ENCODE measurements at regions of chr3 and their contacts with region 1.

Region 1: GRCh38 chr3:65672871-65673815 is 365.6 kb downstream of the MAGI1 start:
- DNase-seq: peak; percentile 78
- H3K4me3 Mint-ChIP-seq: no peak overlapping the region
- H3K27ac Mint-ChIP-seq: no peak overlapping the region
- H3K4me1 Mint-ChIP-seq: peaks cover 9% of the 10 kb centered on the region
- H3K27me3 Mint-ChIP-seq: no peaks in the 10 kb centered on the region
- CTCF ChIP-seq: peak; percentile 64

Region 2: DNA sequence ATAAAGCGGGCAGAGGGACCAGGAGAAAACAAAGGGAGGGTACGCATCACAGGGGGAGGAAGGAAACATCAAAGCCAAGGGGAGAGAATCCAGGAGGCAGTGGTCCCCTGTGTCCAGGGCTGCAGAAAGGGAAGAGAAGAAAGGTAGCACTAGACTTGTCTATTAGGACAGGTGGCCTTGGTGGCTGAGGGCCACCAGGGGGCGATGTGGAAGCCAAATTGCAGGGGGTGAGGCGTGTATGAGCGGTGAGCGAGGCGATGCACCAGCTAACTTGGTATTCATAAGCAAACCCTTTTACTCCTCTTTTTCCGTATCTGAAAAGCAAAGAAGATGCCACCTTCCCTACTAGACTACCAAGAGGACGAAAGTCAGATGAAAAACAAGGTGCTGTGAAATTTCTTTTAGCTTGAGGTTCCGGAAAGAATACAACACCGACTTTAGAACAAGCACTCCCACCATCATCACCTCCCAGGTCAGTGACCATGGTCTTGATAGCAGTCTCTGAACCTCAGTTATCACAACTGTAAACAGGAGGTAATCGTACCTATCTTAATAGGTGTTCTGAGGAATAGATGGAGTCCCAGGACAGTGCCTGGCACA is 331.0 kb before region 1 on chr3:
- CTCF ChIA-PET with region 1: interaction called, 5 read pairs
- POLR2A ChIA-PET with region 1: no interaction called
- intact Hi-C with region 1: loop called (anchors 2 kb)
- DNase-seq: peak; percentile 73
- H3K4me3 Mint-ChIP-seq: no peak overlapping the region
- H3K27ac Mint-ChIP-seq: no peak overlapping the region
- H3K4me1 Mint-ChIP-seq: no peaks in the 10 kb centered on the region
- H3K27me3 Mint-ChIP-seq: peaks cover 13% of the 10 kb centered on the region
- CTCF ChIP-seq: peak; percentile 68

Region 3: GRCh38 chr3:65485826-65486469 is 187.2 kb before region 1 on chr3:
- CTCF ChIA-PET with region 1: no interaction called
- POLR2A ChIA-PET with region 1: no interaction called
- intact Hi-C with region 1: loop called (anchors 5 kb)
- DNase-seq: no peak
- H3K4me3 Mint-ChIP-seq: no peak overlapping the region
- H3K27ac Mint-ChIP-seq: no peak overlapping the region
- H3K4me1 Mint-ChIP-seq: no peaks in the 10 kb centered on the region
- H3K27me3 Mint-ChIP-seq: no peaks in the 10 kb centered on the region
- CTCF ChIP-seq: no peak

Region 4: GRCh38 chr3:65545429-65545828 is 127.7 kb before region 1 on chr3:
- CTCF ChIA-PET with region 1: no interaction called
- POLR2A ChIA-PET with region 1: no interaction called
- intact Hi-C with region 1: no loop called
- DNase-seq: peak; percentile 1
- H3K4me3 Mint-ChIP-seq: no peak overlapping the region
- H3K27ac Mint-ChIP-seq: no peak overlapping the region
- H3K4me1 Mint-ChIP-seq: peaks cover 5% of the 10 kb centered on the region
- H3K27me3 Mint-ChIP-seq: no peaks in the 10 kb centered on the region
- CTCF ChIP-seq: no peak

Region 5: GRCh38 chr3:65575373-65575840 is 97.7 kb before region 1 on chr3:
- CTCF ChIA-PET with region 1: interaction called, 3 read pairs
- POLR2A ChIA-PET with region 1: no interaction called
- intact Hi-C with region 1: loop called (anchors 5 kb)
- DNase-seq: peak; percentile 65
- H3K4me3 Mint-ChIP-seq: peak overlapping the region; percentile 22
- H3K27ac Mint-ChIP-seq: peak overlapping the region; percentile 66
- H3K4me1 Mint-ChIP-seq: peaks cover 30% of the 10 kb centered on the region
- H3K27me3 Mint-ChIP-seq: no peaks in the 10 kb centered on the region
- CTCF ChIP-seq: no peak

Region 6: GRCh38 chr3:65702202-65702601 is 29.1 kb after region 1 on chr3:
- CTCF ChIA-PET with region 1: interaction called, 10 read pairs
- POLR2A ChIA-PET with region 1: no interaction called
- intact Hi-C with region 1: no loop called
- DNase-seq: no peak
- H3K4me3 Mint-ChIP-seq: no peak overlapping the region
- H3K27ac Mint-ChIP-seq: no peak overlapping the region
- H3K4me1 Mint-ChIP-seq: no peaks in the 10 kb centered on the region
- H3K27me3 Mint-ChIP-seq: peaks cover 11% of the 10 kb centered on the region
- CTCF ChIP-seq: no peak